ENCODE measurements at regions of chr6 and their contacts with region 1.

Region 1: DNA sequence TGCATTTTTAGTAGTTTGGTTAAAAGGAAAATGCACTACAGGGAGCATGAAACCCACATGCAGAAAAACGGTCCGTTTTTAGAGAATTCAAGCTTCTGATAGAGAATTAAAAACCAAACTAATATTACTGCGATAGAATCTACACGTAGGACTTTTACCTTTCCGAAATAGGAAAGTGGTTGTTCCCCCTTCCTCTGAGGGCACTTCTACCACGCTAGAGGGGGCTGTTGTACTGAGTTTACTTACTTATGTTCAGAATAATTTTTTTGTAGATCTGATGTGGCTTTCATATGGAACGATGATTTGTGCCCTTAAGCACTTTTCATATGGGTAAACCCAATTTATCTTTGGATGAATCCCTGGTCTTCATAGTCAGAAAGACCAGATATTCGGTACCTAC is 264.3 kb upstream of the PLN start:
- DNase-seq: peak in 4 of 5 donors; percentile 30 to 50 (median 45)
- ATAC-seq: peak in 3 of 4 donors; percentile 46 to 68 (median 63)
- H3K4me3 ChIP-seq: peak overlapping the region in 2 of 12 donors; percentile 8 to 13
- H3K27ac ChIP-seq: peak overlapping the region in 3 of 12 donors; percentile 4 to 84 (median 77)
- H3K4me1 ChIP-seq: peaks cover 0 to 38% (median 8%) of the 10 kb centered on the region in 12 donors
- H3K27me3 ChIP-seq: no peaks in the 10 kb centered on the region
- CTCF ChIP-seq: peak; percentile 59 to 92 (median 82)
- POLR2A ChIP-seq: no peak

Region 2: GRCh38 chr6:118372413-118372812 is 88.6 kb after region 1 on chr6:
- intact Hi-C with region 1: loop called in 3 of 10 experiments (anchors 2 to 5 kb)
- DNase-seq: peak in 4 of 5 donors; percentile 68 to 85 (median 80)
- ATAC-seq: peak; percentile 89 to 95 (median 92)
- H3K4me3 ChIP-seq: no peak overlapping the region
- H3K27ac ChIP-seq: peak overlapping the region; percentile 51 to 93 (median 86)
- H3K4me1 ChIP-seq: peaks cover 0 to 22% (median 6%) of the 10 kb centered on the region in 12 donors
- H3K27me3 ChIP-seq: no peaks in the 10 kb centered on the region
- CTCF ChIP-seq: no peak
- POLR2A ChIP-seq: no peak

Region 3: GRCh38 chr6:118514689-118515088 is 230.9 kb after region 1 on chr6:
- intact Hi-C with region 1: loop called in 9 of 10 experiments (anchors 1 to 5 kb)
- DNase-seq: peak; percentile 57 to 83 (median 78)
- ATAC-seq: peak; percentile 99 to 100 (median 99)
- H3K4me3 ChIP-seq: peak overlapping the region in 3 of 12 donors; percentile 21 to 33 (median 26)
- H3K27ac ChIP-seq: peak overlapping the region; percentile 49 to 87 (median 74)
- H3K4me1 ChIP-seq: peaks cover 0 to 26% (median 1%) of the 10 kb centered on the region in 12 donors
- H3K27me3 ChIP-seq: no peaks in the 10 kb centered on the region
- CTCF ChIP-seq: no peak
- POLR2A ChIP-seq: no peak

Region 4: GRCh38 chr6:118580585-118581419 is 297.0 kb after region 1 on chr6:
- intact Hi-C with region 1: loop called in 8 of 10 experiments (anchors 2 to 10 kb)
- DNase-seq: peak in 3 of 5 donors; percentile 30 to 51 (median 35)
- ATAC-seq: peak; percentile 76 to 95 (median 92)
- H3K4me3 ChIP-seq: peak overlapping the region in 1 of 12 donors; percentile 13
- H3K27ac ChIP-seq: peak overlapping the region in 1 of 12 donors; percentile 46
- H3K4me1 ChIP-seq: peaks cover 0 to 20% (median 4%) of the 10 kb centered on the region in 12 donors
- H3K27me3 ChIP-seq: no peaks in the 10 kb centered on the region
- CTCF ChIP-seq: peak; percentile 54 to 76 (median 69)
- POLR2A ChIP-seq: no peak

Region 5: DNA sequence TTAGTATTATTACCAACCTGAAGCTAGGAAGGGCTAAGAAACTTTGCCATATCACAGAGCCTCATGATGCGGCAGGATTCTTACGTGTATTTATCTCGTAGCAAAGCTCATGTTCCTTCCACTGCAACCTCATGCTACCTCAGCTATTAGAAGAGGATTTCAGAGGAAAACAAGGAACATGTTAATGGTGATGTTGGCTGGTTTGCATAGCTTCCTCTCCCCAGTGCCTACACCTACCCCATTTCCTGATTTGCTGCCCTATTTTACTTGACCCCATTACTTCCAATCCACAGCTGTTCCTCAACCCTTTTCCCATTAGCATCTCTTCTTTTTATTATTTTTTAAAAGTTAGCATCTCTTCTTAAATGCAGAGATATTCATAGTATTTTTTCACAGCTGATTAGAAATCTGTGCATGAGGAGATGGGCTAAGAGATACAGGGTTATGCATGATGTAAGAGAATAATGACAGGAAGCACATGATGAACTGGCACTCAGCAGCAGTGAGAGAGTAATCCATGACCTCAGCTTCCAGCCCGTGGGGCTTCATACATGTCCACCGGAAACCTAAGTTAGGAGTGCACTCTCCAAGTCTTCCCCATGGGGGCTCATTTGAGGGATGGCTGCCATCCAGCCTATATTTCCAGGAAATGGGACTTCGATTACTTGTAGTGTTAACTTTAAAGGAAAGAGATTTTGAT is 504.1 kb after region 1 on chr6:
- intact Hi-C with region 1: loop called in 1 of 10 experiments (anchors 10 kb)
- DNase-seq: peak in 3 of 5 donors; percentile 22 to 27 (median 23)
- ATAC-seq: peak; percentile 47 to 83 (median 62)
- H3K4me3 ChIP-seq: no peak overlapping the region
- H3K27ac ChIP-seq: peak overlapping the region in 1 of 12 donors; percentile 32
- H3K4me1 ChIP-seq: peaks cover 0 to 20% (median 8%) of the 10 kb centered on the region in 12 donors
- H3K27me3 ChIP-seq: no peaks in the 10 kb centered on the region
- CTCF ChIP-seq: no peak
- POLR2A ChIP-seq: no peak

Region 6: DNA sequence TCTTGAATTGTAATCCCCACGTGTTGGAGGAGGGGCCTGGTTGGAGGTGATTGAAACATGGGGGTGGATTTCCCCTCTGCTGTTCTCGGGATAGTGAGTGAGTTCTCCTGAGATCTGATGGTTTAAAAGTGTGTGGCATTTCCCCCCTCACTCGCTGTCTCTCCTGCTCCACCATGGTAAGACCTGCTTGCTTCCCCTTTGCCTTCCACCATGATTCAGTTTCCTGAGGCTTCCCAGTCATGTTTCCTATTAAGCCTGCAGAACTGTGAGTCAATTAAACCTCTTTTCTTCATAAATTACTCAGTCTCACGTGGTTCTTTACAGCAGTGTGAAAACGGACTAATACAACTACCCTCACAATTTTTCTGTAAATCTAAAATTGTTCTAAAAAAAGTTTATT is 821.5 kb after region 1 on chr6:
- intact Hi-C with region 1: loop called in 1 of 10 experiments (anchors 10 kb)
- DNase-seq: no peak
- ATAC-seq: no peak
- H3K4me3 ChIP-seq: no peak overlapping the region
- H3K27ac ChIP-seq: no peak overlapping the region
- H3K4me1 ChIP-seq: peaks cover 0 to 2% (median 0%) of the 10 kb centered on the region in 12 donors
- H3K27me3 ChIP-seq: no peaks in the 10 kb centered on the region
- CTCF ChIP-seq: no peak
- POLR2A ChIP-seq: no peak

Measured in heart left ventricle (tissue), 16 donors.